PC-9 (cell line): ENCODE measurements at regions of chr10 and their contacts with region 1.

Region 1: DNA sequence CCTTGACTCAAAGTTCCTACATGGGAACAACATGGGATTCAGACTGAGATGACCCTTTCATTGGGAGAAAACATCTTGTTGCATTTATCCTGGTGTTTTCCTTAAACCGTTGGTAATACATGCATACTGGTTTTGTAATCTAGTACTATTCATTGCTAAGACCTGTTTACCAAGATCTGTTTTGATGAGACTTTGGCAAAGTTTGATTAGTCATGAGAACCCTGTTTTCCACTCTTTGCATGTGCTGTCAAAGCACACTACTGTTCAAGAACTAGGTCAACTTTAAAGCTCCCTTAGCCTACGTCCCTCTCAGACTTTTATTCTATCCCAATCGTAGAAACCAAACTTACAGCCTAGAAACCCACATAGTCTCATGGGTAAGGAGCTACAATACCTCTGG is 650.9 kb downstream of the GATA3 start:
- DNase-seq: no peak
- H3K4me3 ChIP-seq: no peak overlapping the region
- H3K27ac ChIP-seq: no peak overlapping the region
- H3K4me1 ChIP-seq: peaks cover 36% of the 10 kb centered on the region
- H3K27me3 ChIP-seq: no peaks in the 10 kb centered on the region
- CTCF ChIP-seq: no peak

Region 2: GRCh38 chr10:8053446-8054290 is 651.7 kb before region 1 on chr10:
- CTCF ChIA-PET with region 1: no interaction called
- POLR2A ChIA-PET with region 1: no interaction called
- intact Hi-C with region 1: loop called (anchors 5 kb)
- DNase-seq: peak; percentile 52 to 87
- H3K4me3 ChIP-seq: peak overlapping the region; percentile 59
- H3K27ac ChIP-seq: peak overlapping the region; percentile 87
- H3K4me1 ChIP-seq: no peaks in the 10 kb centered on the region
- H3K27me3 ChIP-seq: no peaks in the 10 kb centered on the region
- CTCF ChIP-seq: no peak; the same call in 1 of the 2 replicates

Region 3: DNA sequence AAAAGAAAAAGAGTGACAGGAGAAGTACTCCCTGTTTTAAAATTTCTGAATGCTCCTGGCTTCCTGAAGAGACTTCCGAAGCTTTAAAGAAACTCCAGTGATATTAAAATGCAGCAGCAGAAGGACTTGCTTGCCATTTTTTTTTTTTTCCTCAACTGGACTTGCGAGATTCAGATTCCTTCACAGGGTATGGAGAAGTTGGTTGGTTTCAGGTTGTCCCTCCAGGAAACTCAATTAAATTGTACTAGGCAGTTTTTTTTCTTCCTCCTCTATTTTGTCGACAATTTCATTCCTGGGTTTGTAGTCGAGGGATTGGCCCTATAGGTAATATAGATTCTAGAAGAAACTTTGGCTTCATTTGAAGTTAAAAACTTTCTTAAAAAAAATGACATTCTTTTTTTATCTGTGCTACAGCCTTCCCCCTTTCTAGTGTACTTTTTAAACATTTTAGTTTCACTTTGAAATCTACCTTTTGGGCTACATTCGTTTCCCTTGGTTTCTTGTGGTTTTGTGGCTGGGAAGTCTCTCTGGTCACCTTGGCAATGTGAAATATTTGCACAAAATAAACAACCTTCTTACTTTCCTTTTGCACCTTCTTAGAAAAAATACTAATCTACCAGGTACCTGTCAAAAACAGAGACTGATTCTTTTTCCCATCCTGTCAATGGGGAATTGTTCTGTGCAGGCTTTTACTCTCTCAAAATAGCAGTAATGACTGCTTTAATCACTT is 300.9 kb before region 1 on chr10:
- CTCF ChIA-PET with region 1: no interaction called
- POLR2A ChIA-PET with region 1: no interaction called
- intact Hi-C with region 1: loop called (anchors 10 kb)
- DNase-seq: peak; percentile 24 to 77
- H3K4me3 ChIP-seq: peak overlapping the region; percentile 15; the same call in 1 of the 2 replicates
- H3K27ac ChIP-seq: peak overlapping the region; percentile 83
- H3K4me1 ChIP-seq: peaks cover 35% of the 10 kb centered on the region
- H3K27me3 ChIP-seq: no peaks in the 10 kb centered on the region
- CTCF ChIP-seq: no peak

Region 4: DNA sequence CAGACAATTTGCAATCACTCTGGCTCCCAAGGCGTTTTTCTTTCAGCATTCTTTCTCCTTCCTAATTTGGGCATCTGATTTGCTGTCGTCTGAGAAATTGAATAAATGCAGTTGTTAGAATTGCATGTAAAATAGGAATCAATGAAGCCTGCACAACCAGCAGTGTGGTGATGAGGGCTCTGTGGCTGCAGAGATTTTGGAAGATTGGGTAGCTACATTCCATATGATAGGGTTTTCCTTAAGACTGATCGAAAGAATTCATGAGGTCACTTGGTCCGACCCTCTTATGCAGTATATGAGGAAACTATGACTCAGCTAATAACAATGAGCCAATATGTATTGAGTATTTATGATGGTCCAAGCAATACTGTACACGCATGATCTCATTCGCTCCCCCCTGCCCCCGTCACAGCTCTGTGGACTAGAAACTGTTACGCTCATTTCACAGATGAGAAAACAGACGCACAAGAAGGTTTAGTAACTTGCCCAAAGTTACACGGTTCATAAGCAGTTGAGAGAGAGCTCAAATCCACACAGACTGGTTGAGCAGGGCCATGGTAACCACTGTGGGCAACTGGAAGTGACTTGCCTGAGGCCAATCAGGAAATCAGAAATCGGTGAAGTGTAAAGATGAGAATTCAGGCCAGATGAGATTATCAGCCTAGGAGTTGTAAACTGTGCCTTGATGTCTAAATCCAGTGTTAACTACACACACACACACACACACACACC is 123.7 kb before region 1 on chr10:
- CTCF ChIA-PET with region 1: no interaction called
- POLR2A ChIA-PET with region 1: no interaction called
- intact Hi-C with region 1: loop called (anchors 2 kb)
- DNase-seq: peak; percentile 67 to 91
- H3K4me3 ChIP-seq: peak overlapping the region; percentile 26; the same call in 1 of the 2 replicates
- H3K27ac ChIP-seq: peak overlapping the region; percentile 92
- H3K4me1 ChIP-seq: peaks cover 34% of the 10 kb centered on the region
- H3K27me3 ChIP-seq: no peaks in the 10 kb centered on the region
- CTCF ChIP-seq: no peak

Region 5: GRCh38 chr10:8670423-8670822 is 35.0 kb before region 1 on chr10:
- CTCF ChIA-PET with region 1: no interaction called
- POLR2A ChIA-PET with region 1: no interaction called
- intact Hi-C with region 1: loop called (anchors 2 kb)
- DNase-seq: peak in 1 of 2 experiments; percentile 81
- H3K4me3 ChIP-seq: no peak overlapping the region
- H3K27ac ChIP-seq: peak overlapping the region; percentile 67
- H3K4me1 ChIP-seq: peaks cover 12% of the 10 kb centered on the region
- H3K27me3 ChIP-seq: no peaks in the 10 kb centered on the region
- CTCF ChIP-seq: no peak

Region 6: DNA sequence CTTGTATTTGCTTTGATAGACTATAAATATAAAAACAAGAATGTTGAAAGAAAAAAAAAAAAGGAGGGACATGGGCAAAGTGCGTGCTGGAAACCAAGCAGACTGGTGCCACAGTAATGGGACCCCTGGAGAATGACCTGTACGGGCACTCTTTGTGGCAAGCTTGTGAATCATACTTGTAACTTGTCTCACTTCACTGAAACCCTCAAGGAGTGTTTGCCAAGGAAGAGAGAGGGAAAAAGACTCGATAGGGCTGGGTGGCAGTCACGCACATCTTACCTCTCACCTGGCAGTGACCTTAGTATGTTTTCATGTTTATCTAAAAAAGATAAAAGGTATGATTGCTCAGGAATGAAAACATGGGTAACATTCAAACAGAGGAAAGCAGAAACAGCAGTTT is 532.7 kb after region 1 on chr10:
- CTCF ChIA-PET with region 1: no interaction called
- POLR2A ChIA-PET with region 1: interaction called, 26 read pairs
- intact Hi-C with region 1: no loop called
- DNase-seq: peak in 1 of 2 experiments; percentile 50
- H3K4me3 ChIP-seq: no peak overlapping the region
- H3K27ac ChIP-seq: no peak overlapping the region
- H3K4me1 ChIP-seq: no peaks in the 10 kb centered on the region
- H3K27me3 ChIP-seq: no peaks in the 10 kb centered on the region
- CTCF ChIP-seq: no peak